ENCODE measurements at regions of chr20 and their contacts with region 1.

Region 1: DNA sequence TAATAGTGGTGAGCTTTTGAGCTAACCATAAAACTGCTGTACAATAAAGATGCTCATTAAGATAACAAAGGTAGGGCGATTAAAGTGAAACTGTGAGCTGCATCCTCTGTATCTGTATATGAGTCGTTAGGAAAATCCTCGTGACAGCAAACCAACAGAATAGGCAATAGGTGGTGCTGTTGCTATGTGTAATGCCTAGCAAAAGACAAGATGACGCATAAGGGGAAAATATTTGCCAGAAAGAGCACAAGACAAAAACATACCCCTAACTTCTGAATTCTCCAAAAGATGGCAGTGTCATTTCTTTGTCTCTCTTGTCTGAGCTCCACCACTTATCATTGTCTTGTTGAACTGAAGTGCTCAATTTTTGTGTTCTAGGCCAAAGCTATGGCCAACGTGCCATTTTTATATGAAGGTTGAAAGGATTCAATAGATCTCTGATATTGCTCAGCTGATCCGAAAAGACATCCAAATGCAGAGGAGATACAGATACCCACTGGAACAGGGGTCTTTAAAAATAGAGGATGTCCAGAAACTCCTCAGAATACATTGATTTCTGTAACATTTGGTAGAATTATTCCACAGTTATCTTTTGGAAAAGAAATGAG is 56.3 kb upstream of the ANKEF1 start:
- DNase-seq: peak; percentile 57
- H3K4me3 Mint-ChIP-seq: no peak overlapping the region
- H3K27ac Mint-ChIP-seq: no peak overlapping the region
- H3K4me1 Mint-ChIP-seq: peaks cover 2% of the 10 kb centered on the region
- H3K27me3 Mint-ChIP-seq: peaks cover 2% of the 10 kb centered on the region

Region 2: GRCh38 chr20:9919271-9920014 is 59.1 kb before region 1 on chr20:
- CTCF ChIA-PET with region 1: no interaction called
- intact Hi-C with region 1: no loop called
- DNase-seq: no peak
- H3K4me3 Mint-ChIP-seq: no peak overlapping the region
- H3K27ac Mint-ChIP-seq: no peak overlapping the region
- H3K4me1 Mint-ChIP-seq: no peaks in the 10 kb centered on the region
- H3K27me3 Mint-ChIP-seq: peaks cover 8% of the 10 kb centered on the region

Region 3: DNA sequence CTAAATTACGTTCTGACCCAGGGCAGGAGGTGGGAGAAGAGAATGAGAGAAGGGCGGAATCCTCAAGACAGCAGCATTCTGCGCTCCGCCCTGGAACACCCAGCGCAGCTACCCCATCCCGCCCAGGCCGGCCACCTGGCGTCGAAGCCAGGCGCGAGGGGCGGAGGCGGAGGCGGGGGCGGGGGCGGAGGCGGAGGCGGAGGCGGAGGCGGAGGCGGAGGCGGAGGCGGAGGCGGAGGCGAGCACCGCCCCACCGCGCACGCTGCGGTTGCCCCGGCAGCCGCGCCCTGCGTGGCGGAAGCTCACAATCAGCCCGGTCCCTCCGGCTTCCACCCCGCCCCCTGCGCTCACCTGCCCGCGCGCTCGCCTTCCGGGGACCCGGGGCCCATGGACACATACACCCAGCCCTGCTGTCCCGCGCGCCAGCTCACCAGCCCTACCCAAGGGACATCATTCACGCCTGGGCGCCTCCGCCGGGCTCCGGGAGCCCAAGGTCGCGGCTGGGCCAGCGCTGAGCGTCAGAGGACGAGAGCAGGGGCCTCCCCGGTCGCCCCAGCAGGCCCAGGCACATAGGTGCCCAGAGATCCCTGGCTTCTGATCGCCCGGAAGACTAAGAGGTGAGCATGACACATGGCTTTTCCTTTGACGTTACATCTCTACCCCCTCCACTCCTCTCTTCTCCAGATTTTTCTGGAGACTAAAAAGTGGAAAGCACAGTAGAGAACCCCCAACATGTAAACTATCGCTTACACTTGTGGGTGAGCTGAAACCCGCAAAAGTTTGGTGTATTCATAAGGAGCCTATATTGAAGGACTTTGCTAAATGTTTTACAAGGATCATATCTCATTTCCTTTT is 56.4 kb after region 1 on chr20 and contains the start of gene ANKEF1:
- CTCF ChIA-PET with region 1: interaction called, 4 read pairs
- intact Hi-C with region 1: loop called (anchors 2 kb)
- DNase-seq: peak; percentile 75
- H3K4me3 Mint-ChIP-seq: peak within 1 kb of the TSS; percentile 66
- H3K27ac Mint-ChIP-seq: no peak within 1 kb of the TSS
- H3K4me1 Mint-ChIP-seq: peaks cover 6% of the 10 kb centered on the region
- H3K27me3 Mint-ChIP-seq: no peaks in the 10 kb centered on the region
- total RNA-seq, gene ANKEF1: 2.8 to 3.2 TPM

Region 4: GRCh38 chr20:10171864-10172751 is 193.6 kb after region 1 on chr20:
- CTCF ChIA-PET with region 1: no interaction called
- intact Hi-C with region 1: no loop called
- DNase-seq: peak; percentile 43
- H3K4me3 Mint-ChIP-seq: peak overlapping the region; percentile 30
- H3K27ac Mint-ChIP-seq: no peak overlapping the region
- H3K4me1 Mint-ChIP-seq: peaks cover 3% of the 10 kb centered on the region
- H3K27me3 Mint-ChIP-seq: peaks cover 34% of the 10 kb centered on the region

Region 5: DNA sequence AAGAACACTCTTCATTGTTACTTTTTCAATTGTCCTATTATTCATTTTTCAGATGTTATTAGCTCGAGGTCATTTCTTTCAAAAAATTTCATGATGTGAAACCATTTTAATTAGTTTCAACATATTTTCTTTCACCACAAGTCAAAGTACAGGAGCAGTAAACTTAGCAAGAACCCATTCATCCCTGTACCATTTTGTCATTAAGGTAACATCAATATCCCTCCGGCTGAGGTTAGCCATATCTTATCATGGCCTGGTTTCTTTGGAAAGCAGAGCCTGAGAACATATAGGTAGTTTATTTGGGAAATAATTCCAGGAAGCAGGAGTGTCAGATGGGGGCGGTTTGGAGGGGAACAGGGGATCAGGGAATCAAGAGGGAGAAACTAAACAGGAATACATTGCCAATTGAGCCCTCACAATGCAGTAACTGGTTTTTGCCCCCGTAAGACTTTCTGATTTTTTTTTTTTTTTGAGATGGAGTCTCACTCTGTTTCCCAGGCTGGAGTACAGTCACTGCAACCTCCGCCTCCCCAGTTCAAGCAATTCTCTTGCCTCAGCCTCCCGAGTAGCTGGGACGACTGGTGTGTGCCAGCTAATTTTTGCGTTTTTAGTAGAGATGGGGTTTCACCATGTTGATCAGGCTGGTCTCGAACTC is 371.8 kb after region 1 on chr20:
- CTCF ChIA-PET with region 1: no interaction called
- intact Hi-C with region 1: loop called (anchors 2 kb)
- DNase-seq: no peak
- H3K4me3 Mint-ChIP-seq: no peak overlapping the region
- H3K27ac Mint-ChIP-seq: peak overlapping the region; percentile 86
- H3K4me1 Mint-ChIP-seq: peaks cover 19% of the 10 kb centered on the region
- H3K27me3 Mint-ChIP-seq: no peaks in the 10 kb centered on the region

Region 6: DNA sequence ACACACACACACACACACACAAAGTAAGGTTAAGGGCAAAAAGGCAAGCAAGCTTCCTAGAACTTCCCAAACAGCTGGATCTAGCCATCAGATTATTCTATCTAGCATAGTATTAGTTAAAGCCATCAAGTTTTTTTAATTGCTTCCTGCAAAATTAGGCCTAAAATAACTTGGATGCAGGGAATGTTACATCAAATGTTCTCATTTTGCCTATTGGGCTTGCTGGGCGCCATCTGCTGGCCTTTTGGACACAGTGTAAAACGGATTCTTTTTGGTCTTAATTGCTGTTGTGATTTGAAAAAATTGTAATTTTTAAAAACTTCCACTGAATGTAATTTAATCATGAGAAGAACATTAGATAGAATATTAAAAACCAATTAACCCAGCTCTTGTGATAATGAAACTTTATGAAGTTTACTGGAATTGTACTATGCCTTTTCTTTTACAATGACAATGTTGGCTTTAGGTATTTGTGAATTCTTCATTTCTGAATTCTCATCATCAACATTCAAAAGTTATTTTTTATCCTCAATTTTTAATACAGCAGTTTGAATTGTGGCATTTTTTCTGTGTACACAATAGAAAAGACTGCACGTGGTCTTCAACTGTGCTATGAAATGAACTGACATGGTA is 448.7 kb after region 1 on chr20:
- CTCF ChIA-PET with region 1: interaction called, 8 read pairs
- intact Hi-C with region 1: loop called (anchors 1 kb)
- DNase-seq: peak; percentile 63
- H3K4me3 Mint-ChIP-seq: no peak overlapping the region
- H3K27ac Mint-ChIP-seq: no peak overlapping the region
- H3K4me1 Mint-ChIP-seq: peaks cover 44% of the 10 kb centered on the region
- H3K27me3 Mint-ChIP-seq: no peaks in the 10 kb centered on the region

Region 7: DNA sequence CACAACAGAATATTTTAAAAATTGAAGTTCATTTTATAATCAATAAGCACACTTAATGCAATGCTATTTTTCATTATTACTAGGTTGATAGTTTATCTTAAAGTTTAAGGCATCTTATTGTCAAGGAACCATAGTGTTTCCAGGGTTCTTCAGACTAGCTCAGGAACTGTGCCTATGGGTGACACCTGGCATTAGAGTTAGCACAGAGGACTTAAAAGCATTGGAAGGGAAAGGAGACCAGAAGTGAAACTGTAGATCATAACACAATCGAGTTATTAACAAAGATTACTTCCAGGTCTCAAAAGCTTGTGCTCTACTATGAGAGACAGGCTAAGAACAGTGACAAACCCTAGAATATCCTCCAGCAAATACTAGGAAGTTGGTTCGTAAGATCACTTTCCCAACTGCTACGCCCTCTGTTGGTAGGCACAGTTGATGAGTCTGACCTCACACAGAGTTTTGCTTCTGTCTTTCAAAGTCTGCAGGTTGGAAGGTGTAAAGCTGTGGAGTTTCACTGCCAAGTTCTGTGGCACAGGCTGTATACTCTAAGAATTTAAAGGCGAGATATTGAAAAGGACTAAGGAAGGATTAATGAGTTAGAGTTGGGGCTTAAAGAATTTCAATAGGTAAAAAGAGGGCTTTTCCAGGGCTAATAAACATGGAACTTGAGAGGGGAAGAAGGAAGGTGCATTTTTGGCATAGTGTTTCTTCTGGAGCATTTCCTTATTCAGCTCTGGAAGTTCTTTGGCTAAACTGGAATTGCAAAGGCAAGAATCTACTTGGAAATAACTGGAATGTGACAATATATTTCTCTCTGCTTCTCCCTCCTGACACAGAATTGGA is 1226.6 kb after region 1 on chr20:
- CTCF ChIA-PET with region 1: no interaction called
- intact Hi-C with region 1: loop called (anchors 1 kb)
- DNase-seq: peak; percentile 43
- H3K4me3 Mint-ChIP-seq: no peak overlapping the region
- H3K27ac Mint-ChIP-seq: no peak overlapping the region
- H3K4me1 Mint-ChIP-seq: no peaks in the 10 kb centered on the region
- H3K27me3 Mint-ChIP-seq: no peaks in the 10 kb centered on the region

Measured in activated naive CD4-positive, alpha-beta T cell treated with anti-CD3 and anti-CD28 coated beads for 36 hours (primary cell).